CD14-positive monocyte (primary cell): ENCODE measurements at regions of chr22 and their contacts with region 1.

Region 1: DNA sequence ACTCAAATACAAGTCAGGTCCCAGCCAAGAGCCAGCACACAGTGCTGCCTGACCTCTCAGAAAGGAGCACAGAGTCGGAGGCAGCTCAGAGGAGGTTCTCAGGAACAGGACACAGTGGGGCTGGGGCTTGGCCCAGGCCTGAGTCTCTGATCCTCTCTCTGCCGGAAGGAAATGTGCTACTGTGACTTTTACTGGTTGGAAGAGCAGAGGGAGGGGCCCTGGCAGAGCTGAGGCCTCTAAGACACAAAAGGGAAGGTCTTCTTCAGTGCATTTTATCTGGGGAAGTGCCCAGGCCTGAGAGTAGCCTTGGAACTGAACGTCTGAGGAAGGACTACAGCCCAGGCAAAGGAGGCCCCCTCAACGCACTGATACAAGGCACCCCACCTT is 16.2 kb upstream of the CASTOR1 start:
- DNase-seq: peak; percentile 68 to 82 (median 80)
- H3K4me3 ChIP-seq: peak overlapping the region in 1 of 3 experiments; percentile 63
- H3K4me3 Mint-ChIP-seq: peak overlapping the region; percentile 31 to 76
- H3K27ac ChIP-seq: peak overlapping the region; percentile 76 to 87
- H3K27ac Mint-ChIP-seq: peak overlapping the region; percentile 84 to 95 (median 93)
- H3K4me1 ChIP-seq: peaks cover 93 to 97% of the 10 kb centered on the region in 2 donors
- H3K4me1 Mint-ChIP-seq: peaks cover 97% of the 10 kb centered on the region
- H3K27me3 ChIP-seq: no peaks in the 10 kb centered on the region
- H3K27me3 Mint-ChIP-seq: peaks cover 0 to 3% (median under 1%) of the 10 kb centered on the region in 3 donors
- CTCF ChIP-seq: no peak

Region 2: GRCh38 chr22:30287648-30288418 is 17.7 kb before region 1 on chr22:
- intact Hi-C with region 1: no loop called
- DNase-seq: peak; percentile 78 to 90 (median 89)
- H3K4me3 ChIP-seq: peak overlapping the region in 1 of 3 experiments; percentile 82
- H3K4me3 Mint-ChIP-seq: peak overlapping the region; percentile 83 to 86
- H3K27ac ChIP-seq: no peak overlapping the region
- H3K27ac Mint-ChIP-seq: peak overlapping the region; percentile 42 to 89 (median 58)
- H3K4me1 ChIP-seq: peaks cover 34 to 59% of the 10 kb centered on the region in 2 donors
- H3K4me1 Mint-ChIP-seq: peaks cover 47% of the 10 kb centered on the region
- H3K27me3 ChIP-seq: no peaks in the 10 kb centered on the region
- H3K27me3 Mint-ChIP-seq: peaks cover 0 to 4% (median 2%) of the 10 kb centered on the region in 3 donors
- CTCF ChIP-seq: peak; percentile 71

Region 3: DNA sequence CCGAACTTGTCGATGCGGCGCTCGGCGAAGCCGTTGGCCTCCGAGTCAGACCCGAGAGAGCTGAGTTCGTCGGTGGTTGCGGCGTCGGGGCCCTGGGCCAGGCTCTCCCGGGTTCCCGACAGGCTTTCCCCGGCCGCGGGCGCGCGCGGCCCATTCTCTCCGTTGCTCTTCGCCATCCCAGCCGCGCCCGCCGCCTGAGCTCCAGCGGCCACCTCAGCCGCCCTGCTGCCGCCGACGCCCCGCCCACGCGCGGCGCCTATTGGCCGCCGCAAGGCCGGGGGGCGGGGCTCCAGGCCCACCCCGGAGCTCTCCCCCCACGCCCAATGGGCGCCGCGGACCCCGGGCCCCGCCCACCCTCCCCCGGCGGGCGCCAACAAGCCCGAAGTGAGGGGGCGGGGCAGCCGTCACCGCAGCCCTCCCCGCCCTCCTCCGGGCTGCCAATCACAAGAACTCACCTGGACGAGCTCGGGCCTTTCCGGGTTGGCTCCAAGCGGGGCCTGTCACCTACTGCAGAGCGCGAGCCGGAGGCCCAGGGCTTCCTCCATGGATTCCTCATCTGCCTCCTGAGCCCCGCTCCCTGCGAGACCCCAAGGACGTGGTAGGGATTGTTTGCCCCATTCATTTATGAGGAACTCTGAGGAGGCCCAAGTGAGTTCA is 21.3 kb after region 1 on chr22 and contains the start of gene TBC1D10A:
- intact Hi-C with region 1: loop called in 1 of 2 experiments (anchors 2 kb)
- DNase-seq: peak; percentile 76 to 85 (median 81)
- H3K4me3 ChIP-seq: peak within 1 kb of the TSS; percentile 60 to 88 (median 86)
- H3K4me3 Mint-ChIP-seq: peak within 1 kb of the TSS; percentile 88 to 91
- H3K27ac ChIP-seq: peak within 1 kb of the TSS; percentile 39 to 64
- H3K27ac Mint-ChIP-seq: peak within 1 kb of the TSS; percentile 57 to 90 (median 76)
- H3K4me1 ChIP-seq: peaks cover 36 to 48% of the 10 kb centered on the region in 2 donors
- H3K4me1 Mint-ChIP-seq: peaks cover 46% of the 10 kb centered on the region
- H3K27me3 ChIP-seq: no peaks in the 10 kb centered on the region
- H3K27me3 Mint-ChIP-seq: no peaks in the 10 kb centered on the region
- CTCF ChIP-seq: no peak
- polyA plus RNA-seq, gene TBC1D10A: 13.4 to 38.3 (median 21.8) TPM

Region 4: GRCh38 chr22:30356449-30357235 is 51.1 kb after region 1 on chr22 and contains the starts of genes CCDC157 and SF3A1:
- intact Hi-C with region 1: loop called in 1 of 2 experiments (anchors 10 kb)
- DNase-seq: peak; percentile 87 to 89 (median 88)
- H3K4me3 ChIP-seq: peak within 1 kb of the TSS; percentile 71 to 94 (median 87)
- H3K4me3 Mint-ChIP-seq: peak within 1 kb of the TSS; percentile 93 to 94
- H3K27ac ChIP-seq: peak within 1 kb of the TSS; percentile 77 to 95
- H3K27ac Mint-ChIP-seq: peak within 1 kb of the TSS; percentile 86 to 93 (median 90)
- H3K4me1 ChIP-seq: peaks cover 25 to 28% of the 10 kb centered on the region in 2 donors
- H3K4me1 Mint-ChIP-seq: peaks cover 31% of the 10 kb centered on the region
- H3K27me3 ChIP-seq: peaks cover 0 to 3% of the 10 kb centered on the region in 2 donors
- H3K27me3 Mint-ChIP-seq: peaks cover 0 to 18% (median 14%) of the 10 kb centered on the region in 3 donors
- CTCF ChIP-seq: no peak
- polyA plus RNA-seq, gene CCDC157: 0.50 to 3.7 (median 0.54) TPM
- polyA plus RNA-seq, gene SF3A1: 34.7 to 102 (median 52.1) TPM

Region 5: DNA sequence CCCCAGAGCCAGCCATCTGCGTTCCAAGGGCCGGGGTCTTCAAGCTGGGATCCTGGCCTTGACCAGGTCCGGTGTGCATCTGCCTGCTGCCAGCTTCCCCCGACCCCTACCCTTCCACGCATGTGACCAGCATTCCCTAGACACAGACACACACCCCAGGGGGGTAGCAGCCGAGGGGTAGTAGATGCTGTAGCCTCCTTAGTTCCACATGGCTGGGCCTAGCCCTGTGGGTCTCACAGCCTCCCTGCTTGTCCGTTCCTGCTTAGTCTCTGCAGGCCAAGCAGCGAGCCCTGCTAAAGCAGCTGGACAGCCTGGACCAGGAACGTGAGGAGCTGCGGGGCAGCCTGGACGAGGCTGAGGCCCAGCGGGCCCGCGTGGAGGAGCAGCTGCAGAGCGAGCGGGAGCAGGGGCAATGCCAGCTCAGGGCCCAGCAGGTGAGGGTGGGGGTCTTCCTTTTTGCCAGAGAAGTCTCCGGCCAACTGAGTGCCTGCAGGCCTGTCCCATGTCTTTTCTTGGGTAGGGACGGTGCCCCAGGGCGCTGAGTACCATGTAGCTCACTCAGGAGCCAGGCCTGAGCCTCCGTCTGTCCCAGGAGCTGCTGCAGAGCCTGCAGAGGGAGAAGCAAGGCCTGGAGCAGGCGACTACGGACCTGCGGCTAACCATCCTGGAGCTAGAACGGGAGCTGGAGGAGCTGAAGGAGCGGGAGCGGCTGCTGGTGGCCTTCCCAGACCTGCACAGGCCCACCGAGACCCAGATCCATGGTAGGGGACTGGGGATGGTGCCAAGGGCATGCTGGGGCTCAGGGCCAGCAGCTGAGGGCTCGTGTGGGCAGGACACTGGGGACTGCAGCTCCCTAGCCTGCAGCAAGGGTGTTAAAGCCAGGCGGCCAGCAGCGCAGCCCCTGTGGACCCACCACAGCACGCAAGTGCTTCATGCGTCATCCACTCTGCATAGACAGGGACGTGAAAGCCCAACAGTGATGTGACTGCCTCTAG is 68.1 kb after region 1 on chr22:
- intact Hi-C with region 1: no loop called
- DNase-seq: no peak
- H3K4me3 ChIP-seq: peak overlapping the region in 1 of 3 experiments; percentile 55
- H3K4me3 Mint-ChIP-seq: peak overlapping the region in 1 of 2 donors; percentile 47
- H3K27ac ChIP-seq: peak overlapping the region; percentile 63 to 80
- H3K27ac Mint-ChIP-seq: peak overlapping the region in 6 of 7 donors; percentile 82 to 92 (median 86)
- H3K4me1 ChIP-seq: peaks cover 16 to 17% of the 10 kb centered on the region in 2 donors
- H3K4me1 Mint-ChIP-seq: peaks cover 13% of the 10 kb centered on the region
- H3K27me3 ChIP-seq: no peaks in the 10 kb centered on the region
- H3K27me3 Mint-ChIP-seq: no peaks in the 10 kb centered on the region
- CTCF ChIP-seq: no peak

Region 6: DNA sequence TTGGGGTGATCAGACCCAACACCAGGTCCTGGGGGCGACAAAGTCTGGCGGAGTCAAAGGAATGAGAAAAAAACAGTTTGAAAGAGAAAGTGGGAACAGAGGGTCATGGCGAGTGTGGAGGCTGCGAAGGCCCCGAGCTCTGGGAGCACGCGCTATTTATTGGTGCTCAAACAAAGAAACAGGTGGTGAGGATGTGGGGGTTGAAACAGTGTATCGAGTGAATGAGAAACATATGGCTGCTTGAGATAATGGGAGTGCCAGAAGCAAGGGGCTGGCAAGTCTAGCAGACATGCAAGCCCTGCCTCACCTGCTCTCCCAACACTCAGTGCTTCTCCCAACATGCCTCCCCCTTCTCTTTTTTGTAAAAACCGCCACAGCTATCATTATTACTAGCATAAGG is 369.9 kb after region 1 on chr22:
- intact Hi-C with region 1: no loop called
- DNase-seq: no peak
- H3K4me3 ChIP-seq: no peak overlapping the region
- H3K4me3 Mint-ChIP-seq: peak overlapping the region in 1 of 2 donors; percentile 4
- H3K27ac ChIP-seq: no peak overlapping the region
- H3K27ac Mint-ChIP-seq: no peak overlapping the region
- H3K4me1 ChIP-seq: no peaks in the 10 kb centered on the region
- H3K4me1 Mint-ChIP-seq: peaks cover 7% of the 10 kb centered on the region
- H3K27me3 ChIP-seq: no peaks in the 10 kb centered on the region
- H3K27me3 Mint-ChIP-seq: peaks cover 0 to 5% (median 5%) of the 10 kb centered on the region in 3 donors
- CTCF ChIP-seq: no peak